GM10248 (cell line): ENCODE measurements at regions of chr3 and their contacts with region 1.

Region 1: GRCh38 chr3:23519314-23520208 is 286.2 kb upstream of the UBE2E1 start:
- DNase-seq: no peak
- CTCF ChIP-seq: no peak

Region 2: GRCh38 chr3:23474580-23475357 is 44.8 kb before region 1 on chr3:
- CTCF ChIA-PET with region 1: no interaction called
- POLR2A ChIA-PET with region 1: no interaction called
- DNase-seq: no peak
- CTCF ChIP-seq: no peak

Region 3: GRCh38 chr3:23508464-23508863 is 11.1 kb before region 1 on chr3:
- CTCF ChIA-PET with region 1: interaction called, 22 read pairs
- POLR2A ChIA-PET with region 1: no interaction called
- DNase-seq: no peak
- CTCF ChIP-seq: no peak

Region 4: DNA sequence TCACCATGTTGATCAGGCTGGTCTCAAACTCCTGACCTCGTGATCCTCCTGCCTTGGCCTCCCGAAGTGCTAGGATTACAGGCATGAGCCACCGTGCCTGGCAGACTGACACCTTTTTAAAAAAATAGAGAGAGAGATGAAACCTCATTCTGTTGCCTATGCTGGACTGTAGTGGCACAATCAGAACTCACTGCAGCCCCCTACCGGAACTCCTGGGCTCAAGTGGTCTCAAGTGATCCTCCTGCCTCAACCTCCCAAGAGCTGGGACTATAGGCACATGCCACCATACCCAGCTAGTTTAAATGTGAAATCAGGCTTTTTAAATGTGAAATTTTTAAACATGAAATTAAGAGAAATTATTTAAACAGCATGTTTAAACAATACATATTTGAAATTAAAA is 21.0 kb after region 1 on chr3:
- CTCF ChIA-PET with region 1: no interaction called
- POLR2A ChIA-PET with region 1: no interaction called
- DNase-seq: no peak
- CTCF ChIP-seq: no peak

Region 5: DNA sequence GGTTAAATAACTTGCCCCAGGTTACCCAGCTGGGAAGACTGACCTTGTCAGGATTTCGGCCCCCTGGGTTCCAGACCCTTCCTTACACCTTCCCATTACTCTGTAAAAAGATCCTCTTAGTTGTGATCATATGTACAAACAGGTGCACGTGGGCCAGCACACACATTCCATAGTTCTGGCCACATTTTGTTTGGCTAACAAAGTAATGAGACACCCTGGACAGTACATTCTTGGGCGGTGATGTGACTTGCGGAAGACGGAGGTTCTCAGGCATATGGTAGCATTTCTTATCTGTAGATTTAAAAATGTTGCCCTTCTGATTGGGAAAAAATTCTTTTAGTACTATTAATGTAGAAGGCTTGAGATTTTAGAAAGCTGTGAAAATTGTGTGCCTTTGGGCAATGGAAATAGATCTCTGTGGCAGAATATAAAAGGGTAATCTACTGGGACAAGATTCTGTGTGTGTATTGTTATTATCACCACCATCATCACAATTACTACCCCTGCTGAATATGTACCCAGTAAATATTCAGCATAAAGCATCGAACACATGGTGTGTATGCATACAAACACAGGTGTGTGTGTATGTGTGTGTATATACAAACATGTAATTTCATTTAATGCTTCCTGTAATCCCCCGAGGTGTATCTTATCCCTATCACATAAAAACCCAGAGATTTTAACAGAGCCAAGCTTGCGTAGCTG is 80.8 kb after region 1 on chr3:
- CTCF ChIA-PET with region 1: no interaction called
- POLR2A ChIA-PET with region 1: no interaction called
- DNase-seq: no peak
- CTCF ChIP-seq: no peak

Region 6: GRCh38 chr3:23653647-23654525 is 134.3 kb after region 1 on chr3:
- CTCF ChIA-PET with region 1: no interaction called
- POLR2A ChIA-PET with region 1: no interaction called
- DNase-seq: peak; percentile 69
- CTCF ChIP-seq: no peak